ENCODE measurements at regions of chr9 and their contacts with region 1.

Region 1: DNA sequence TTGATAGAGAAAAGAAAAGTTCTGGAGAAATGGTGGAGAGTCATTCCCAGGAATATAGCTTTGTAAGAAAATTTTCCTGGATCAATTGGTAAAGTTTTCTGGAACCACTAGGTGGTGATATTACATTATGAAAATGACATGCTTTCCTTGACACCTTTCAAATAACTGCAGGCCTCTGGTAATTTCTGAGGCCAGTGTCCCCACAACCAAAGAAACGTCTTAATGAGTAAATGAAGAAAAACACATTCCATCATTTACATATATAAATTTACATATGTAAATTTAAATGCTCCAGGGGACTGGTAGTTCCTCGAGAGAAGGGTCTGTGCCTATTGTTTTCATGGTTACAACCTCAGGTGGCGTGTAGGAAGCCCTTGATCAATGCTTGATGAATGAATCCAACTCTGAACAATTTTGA is 17.2 kb upstream of the RGS3 start:
- DNase-seq: peak; percentile 72
- H3K4me3 ChIP-seq: no peak overlapping the region; a peak in 1 of 4 replicates
- H3K27ac ChIP-seq: no peak overlapping the region
- H3K4me1 ChIP-seq: no peaks in the 10 kb centered on the region
- H3K27me3 ChIP-seq: no peaks in the 10 kb centered on the region
- CTCF ChIP-seq: peak; percentile 77
- EP300 ChIP-seq: no peak
- RAD21 ChIP-seq: peak; percentile 94

Region 2: GRCh38 chr9:113401027-113401792 is 45.1 kb before region 1 on chr9 and contains the start of gene ALAD:
- CTCF ChIA-PET with region 1: interaction called, 14 read pairs
- POLR2A ChIA-PET with region 1: no interaction called
- DNase-seq: peak; percentile 100
- H3K4me3 ChIP-seq: peak within 1 kb of the TSS; percentile 85 to 98
- H3K27ac ChIP-seq: peak within 1 kb of the TSS; percentile 46 to 62; a peak in 3 of 4 replicates
- H3K4me1 ChIP-seq: peaks cover 8 to 10% of the 10 kb centered on the region in 2 experiments; a peak in 1 of 4 replicates
- H3K27me3 ChIP-seq: no peaks in the 10 kb centered on the region
- CTCF ChIP-seq: peak; percentile 93
- EP300 ChIP-seq: no peak
- RAD21 ChIP-seq: peak; percentile 69
- polyA plus RNA-seq, gene ALAD: 10.7 and 11.8 TPM in 2 replicates

Region 3: GRCh38 chr9:113463418-113464285 is 17.3 kb after region 1 on chr9 and contains the start of gene RGS3:
- CTCF ChIA-PET with region 1: interaction called, 22 read pairs
- POLR2A ChIA-PET with region 1: no interaction called
- DNase-seq: no peak
- H3K4me3 ChIP-seq: no peak within 1 kb of the TSS
- H3K27ac ChIP-seq: no peak within 1 kb of the TSS
- H3K4me1 ChIP-seq: peaks cover 0 to 18% of the 10 kb centered on the region in 2 experiments; a peak in 2 of 4 replicates
- H3K27me3 ChIP-seq: no peaks in the 10 kb centered on the region
- CTCF ChIP-seq: no peak
- EP300 ChIP-seq: no peak
- RAD21 ChIP-seq: no peak
- polyA plus RNA-seq, gene RGS3: 50.6 and 60.7 TPM in 2 replicates

Region 4: GRCh38 chr9:113558632-113559502 is 112.5 kb after region 1 on chr9:
- CTCF ChIA-PET with region 1: interaction called, 19 read pairs
- POLR2A ChIA-PET with region 1: interaction called, 3 read pairs
- DNase-seq: peak; percentile 76
- H3K4me3 ChIP-seq: no peak overlapping the region
- H3K27ac ChIP-seq: peak overlapping the region in 1 of 2 experiments; percentile 67; a peak in 2 of 4 replicates
- H3K4me1 ChIP-seq: peaks cover 7 to 11% of the 10 kb centered on the region in 2 experiments; a peak in 2 of 4 replicates
- H3K27me3 ChIP-seq: no peaks in the 10 kb centered on the region
- CTCF ChIP-seq: no peak
- EP300 ChIP-seq: peak in 1 of 2 experiments; percentile 27; a peak in 1 of 4 replicates
- RAD21 ChIP-seq: no peak

Region 5: GRCh38 chr9:113657703-113658544 is 211.6 kb after region 1 on chr9:
- CTCF ChIA-PET with region 1: interaction called, 191 read pairs
- POLR2A ChIA-PET with region 1: no interaction called
- DNase-seq: peak; percentile 83
- H3K4me3 ChIP-seq: no peak overlapping the region; a peak in 1 of 4 replicates
- H3K27ac ChIP-seq: no peak overlapping the region
- H3K4me1 ChIP-seq: peaks cover 11 to 15% of the 10 kb centered on the region in 2 experiments; a peak in 2 of 4 replicates
- H3K27me3 ChIP-seq: no peaks in the 10 kb centered on the region
- CTCF ChIP-seq: peak; percentile 90
- EP300 ChIP-seq: no peak
- RAD21 ChIP-seq: peak; percentile 99